CD4-positive, alpha-beta T cell (primary cell): ENCODE measurements at regions of chr3 and their contacts with region 1.

Region 1: GRCh38 chr3:88180398-88180999 is 30.7 kb downstream of the C3orf38 start:
- DNase-seq: peak in 7 of 14 experiments; percentile 1 to 65 (median 37)
- ATAC-seq: no peak
- H3K4me3 ChIP-seq: no peak overlapping the region
- H3K4me3 Mint-ChIP-seq: no peak overlapping the region
- H3K27ac ChIP-seq: no peak overlapping the region
- H3K27ac Mint-ChIP-seq: no peak overlapping the region
- H3K4me1 ChIP-seq: no peaks in the 10 kb centered on the region
- H3K4me1 Mint-ChIP-seq: no peaks in the 10 kb centered on the region
- H3K27me3 ChIP-seq: no peaks in the 10 kb centered on the region
- H3K27me3 Mint-ChIP-seq: no peaks in the 10 kb centered on the region
- CTCF ChIP-seq: peak; percentile 66

Region 2: GRCh38 chr3:87298111-87298718 is 882.3 kb before region 1 on chr3:
- CTCF ChIA-PET with region 1: interaction called, 4 read pairs
- POLR2A ChIA-PET with region 1: no interaction called
- intact Hi-C with region 1: loop called (anchors 5 to 10 kb)
- DNase-seq: peak in 3 of 14 experiments; percentile 34 to 49 (median 45)
- ATAC-seq: peak; percentile 59
- H3K4me3 ChIP-seq: no peak overlapping the region
- H3K4me3 Mint-ChIP-seq: no peak overlapping the region
- H3K27ac ChIP-seq: no peak overlapping the region
- H3K27ac Mint-ChIP-seq: no peak overlapping the region
- H3K4me1 ChIP-seq: no peaks in the 10 kb centered on the region
- H3K4me1 Mint-ChIP-seq: peaks cover 5% of the 10 kb centered on the region
- H3K27me3 ChIP-seq: no peaks in the 10 kb centered on the region
- H3K27me3 Mint-ChIP-seq: no peaks in the 10 kb centered on the region
- CTCF ChIP-seq: peak; percentile 90

Region 3: DNA sequence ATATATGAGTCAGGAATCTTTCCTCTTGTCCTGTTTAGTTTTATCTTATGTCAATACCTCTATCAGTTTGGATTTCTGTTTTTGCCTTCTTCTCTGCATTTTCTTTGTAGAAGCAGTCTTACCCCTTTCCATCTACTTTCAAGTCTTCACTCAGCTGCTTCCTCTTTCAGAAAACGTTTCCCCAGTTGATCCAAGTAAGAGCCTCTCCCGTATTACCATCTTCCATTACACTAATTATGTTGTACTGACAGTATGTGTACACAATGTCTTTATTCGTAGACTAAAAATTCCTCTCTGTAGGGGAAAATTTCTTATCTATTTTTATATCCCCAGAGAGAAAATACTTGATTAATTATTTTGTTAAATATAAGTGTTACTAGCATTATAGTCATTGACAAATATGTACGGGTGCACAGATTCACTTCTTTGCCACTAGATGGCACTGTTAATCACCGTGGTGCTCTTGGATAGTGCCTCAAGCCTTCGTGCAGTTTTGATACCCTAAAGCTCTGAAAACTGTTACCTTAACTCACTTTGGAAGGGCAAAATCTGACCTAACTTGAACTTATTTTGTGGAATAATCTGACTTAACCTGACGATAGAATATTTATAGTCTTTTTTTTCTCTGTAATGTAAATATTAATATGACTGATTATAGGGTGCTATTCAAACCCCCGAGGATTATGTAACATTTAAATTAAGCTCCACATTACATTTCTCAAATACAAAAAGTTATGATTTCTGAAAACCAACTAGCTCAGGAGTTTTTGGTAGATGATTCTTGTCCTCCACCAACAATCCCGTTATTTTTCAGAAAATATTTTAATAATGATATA is 829.9 kb before region 1 on chr3:
- CTCF ChIA-PET with region 1: interaction called, 4 read pairs
- POLR2A ChIA-PET with region 1: no interaction called
- intact Hi-C with region 1: loop called (anchors 1 to 2 kb)
- DNase-seq: peak in 5 of 14 experiments; percentile 2 to 70 (median 56)
- ATAC-seq: peak; percentile 89
- H3K4me3 ChIP-seq: no peak overlapping the region
- H3K4me3 Mint-ChIP-seq: no peak overlapping the region
- H3K27ac ChIP-seq: no peak overlapping the region
- H3K27ac Mint-ChIP-seq: no peak overlapping the region
- H3K4me1 ChIP-seq: no peaks in the 10 kb centered on the region
- H3K4me1 Mint-ChIP-seq: no peaks in the 10 kb centered on the region
- H3K27me3 ChIP-seq: no peaks in the 10 kb centered on the region
- H3K27me3 Mint-ChIP-seq: no peaks in the 10 kb centered on the region
- CTCF ChIP-seq: peak; percentile 94

Region 4: DNA sequence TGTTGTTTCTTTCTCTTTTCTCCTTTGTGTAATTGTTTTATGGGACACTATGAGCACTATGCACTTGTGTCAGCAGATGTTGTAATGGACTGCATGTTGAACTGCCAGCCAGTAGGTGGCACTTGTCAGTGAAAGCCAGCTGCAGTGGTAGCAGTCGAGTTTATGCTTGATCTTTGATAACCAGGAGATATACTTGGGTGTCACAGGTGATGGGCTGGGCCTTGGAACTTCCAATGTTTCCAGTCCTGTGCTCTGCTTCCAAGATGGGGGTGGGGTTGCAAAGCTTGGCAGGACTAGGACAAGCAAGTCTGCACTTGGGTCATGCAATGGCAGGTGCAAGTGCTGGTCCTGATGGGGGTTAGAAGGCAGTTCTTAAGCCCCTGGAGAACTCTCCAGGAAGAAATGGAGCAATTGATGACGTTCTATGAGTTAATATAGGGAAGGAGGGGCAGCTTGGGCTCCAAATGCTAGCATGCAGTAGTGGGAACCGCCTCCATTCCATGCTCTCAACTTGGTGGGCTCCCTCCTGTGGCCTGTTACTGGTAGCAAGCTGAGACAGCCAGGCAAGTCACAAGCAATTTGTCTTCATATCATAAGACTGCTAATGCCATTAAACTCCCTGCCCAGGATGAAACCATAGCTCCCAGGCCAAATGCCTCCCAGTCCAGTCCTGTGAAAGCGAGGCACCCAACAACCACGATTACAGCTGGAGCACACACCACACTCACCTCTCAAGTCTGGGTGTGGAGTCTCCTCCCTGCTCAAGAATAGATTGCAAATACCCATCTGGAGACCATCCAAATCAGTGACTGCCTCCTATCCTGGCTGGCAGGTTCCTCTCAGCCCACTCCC is 408.9 kb before region 1 on chr3:
- CTCF ChIA-PET with region 1: no interaction called
- POLR2A ChIA-PET with region 1: no interaction called
- intact Hi-C with region 1: loop called (anchors 2 to 5 kb)
- DNase-seq: peak in 12 of 14 experiments; percentile 6 to 70 (median 27)
- ATAC-seq: peak; percentile 78
- H3K4me3 ChIP-seq: no peak overlapping the region
- H3K4me3 Mint-ChIP-seq: no peak overlapping the region
- H3K27ac ChIP-seq: no peak overlapping the region
- H3K27ac Mint-ChIP-seq: no peak overlapping the region
- H3K4me1 ChIP-seq: no peaks in the 10 kb centered on the region
- H3K4me1 Mint-ChIP-seq: no peaks in the 10 kb centered on the region
- H3K27me3 ChIP-seq: no peaks in the 10 kb centered on the region
- H3K27me3 Mint-ChIP-seq: peaks cover 15% of the 10 kb centered on the region
- CTCF ChIP-seq: peak; percentile 64

Region 5: DNA sequence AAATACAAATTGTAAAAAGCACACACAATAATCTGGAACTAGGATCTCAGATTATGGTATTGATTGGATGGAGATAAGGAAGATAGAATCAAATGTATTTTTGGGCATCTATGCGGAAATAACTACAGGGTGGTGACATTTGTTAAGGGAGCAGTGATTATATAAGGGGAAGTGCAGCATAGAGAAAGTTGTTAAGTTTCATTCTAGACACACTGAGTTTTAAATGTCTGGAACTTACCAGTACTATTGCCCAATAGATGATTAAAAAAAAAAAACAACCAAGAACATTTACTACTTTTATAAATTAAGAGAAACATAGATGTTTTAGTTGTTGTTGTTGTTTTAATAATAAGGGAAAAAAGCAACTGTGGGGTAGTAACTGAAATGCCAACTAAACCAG is 62.8 kb before region 1 on chr3:
- CTCF ChIA-PET with region 1: no interaction called
- POLR2A ChIA-PET with region 1: no interaction called
- intact Hi-C with region 1: no loop called
- DNase-seq: no peak
- ATAC-seq: no peak
- H3K4me3 ChIP-seq: no peak overlapping the region
- H3K4me3 Mint-ChIP-seq: no peak overlapping the region
- H3K27ac ChIP-seq: no peak overlapping the region
- H3K27ac Mint-ChIP-seq: no peak overlapping the region
- H3K4me1 ChIP-seq: no peaks in the 10 kb centered on the region
- H3K4me1 Mint-ChIP-seq: peaks cover 28% of the 10 kb centered on the region
- H3K27me3 ChIP-seq: no peaks in the 10 kb centered on the region
- H3K27me3 Mint-ChIP-seq: no peaks in the 10 kb centered on the region
- CTCF ChIP-seq: no peak